Dorsolateral prefrontal cortex (tissue), 120 donors: ENCODE measurements at regions of chr10 and their contacts with region 1.

Region 1: DNA sequence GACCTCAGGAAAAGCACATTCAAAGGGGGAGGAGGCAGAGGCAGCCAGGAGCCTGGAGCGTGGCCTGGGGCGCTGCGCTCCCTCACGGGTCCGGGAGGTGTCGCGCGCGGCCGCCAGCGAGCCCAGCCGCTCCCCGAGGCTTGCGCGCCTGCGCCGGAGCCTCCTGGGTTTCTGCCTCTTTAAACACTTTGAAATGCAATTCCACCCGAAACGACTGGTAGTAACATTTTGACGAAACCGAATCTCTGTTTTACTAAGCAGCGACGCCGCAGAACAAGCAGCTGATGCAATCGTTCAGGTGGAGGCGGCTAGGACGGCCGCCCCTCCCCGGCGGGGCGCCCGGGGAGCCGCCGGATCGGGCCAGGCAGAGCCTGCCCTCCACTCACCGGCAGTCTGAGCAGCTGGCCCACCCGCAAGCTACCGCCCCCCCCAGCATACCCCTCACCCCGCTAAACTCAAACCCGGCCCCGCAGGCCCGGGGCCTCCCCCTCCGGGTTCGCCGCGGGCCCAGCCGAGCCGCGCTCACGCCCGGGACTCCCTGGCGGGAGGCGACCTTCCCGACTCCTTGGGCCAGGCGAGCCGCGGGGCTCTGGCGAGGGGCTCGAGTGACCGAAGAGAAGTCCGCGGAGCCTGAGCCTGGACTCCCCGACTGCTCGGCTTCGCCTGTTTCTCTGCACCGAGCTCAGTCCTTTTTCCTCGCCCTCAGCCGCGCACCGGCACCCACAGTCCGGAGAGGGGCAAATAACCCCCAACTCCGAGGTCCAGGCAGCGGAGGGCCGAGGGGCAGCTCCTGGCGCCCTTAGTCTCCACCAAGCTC is 3.2 kb downstream of the MKX start:
- DNase-seq: peak in 9 of 10 donors; percentile 33 to 79 (median 63)
- H3K4me3 ChIP-seq: peak overlapping the region; percentile 29 to 76 (median 60)
- H3K27ac ChIP-seq: peak overlapping the region in 51 of 59 donors; percentile 33 to 91 (median 72)
- H3K27me3 ChIP-seq: peaks cover 0 to 91% (median 60%) of the 10 kb centered on the region in 45 donors
- CTCF ChIP-seq: peak in 55 of 56 donors; percentile 29 to 82 (median 66)

Region 2: DNA sequence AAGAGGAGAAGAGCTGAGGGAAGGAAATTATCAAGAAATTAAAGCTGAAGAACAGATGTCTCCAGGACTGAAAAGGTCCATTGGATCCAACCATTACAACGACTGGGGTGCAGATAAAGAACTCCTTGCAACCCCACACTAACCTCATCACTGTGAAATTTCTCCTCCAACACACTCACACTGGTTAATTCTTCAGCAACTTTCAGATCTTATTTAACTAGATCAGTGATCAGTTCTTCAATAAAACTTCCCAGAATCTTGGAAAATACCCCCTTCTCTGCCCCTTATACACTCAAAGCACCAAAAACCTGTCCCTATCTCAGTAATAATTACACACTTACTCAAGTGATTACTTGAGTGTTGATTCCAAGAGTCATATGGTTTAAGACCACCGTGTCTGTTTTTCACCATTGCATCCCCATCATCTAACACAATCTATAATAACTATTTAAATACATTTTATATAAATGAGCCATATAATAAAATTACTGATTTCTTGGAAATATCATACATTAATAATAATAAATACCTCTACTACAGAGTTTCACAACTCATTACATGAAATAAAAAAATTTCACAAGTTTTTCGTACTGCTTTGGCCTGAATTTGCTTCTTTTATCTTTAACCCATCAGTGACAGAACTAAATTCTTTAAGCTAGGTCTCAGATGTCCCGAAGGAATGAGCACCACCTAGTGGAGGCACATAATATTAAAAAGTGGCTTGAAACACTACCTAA is 436.8 kb after region 1 on chr10:
- intact Hi-C with region 1: loop called (anchors 10 kb)
- DNase-seq: peak in 1 of 10 donors; percentile 25
- H3K4me3 ChIP-seq: peak overlapping the region in 3 of 59 donors; percentile 4 to 13 (median 4)
- H3K27ac ChIP-seq: no peak overlapping the region
- H3K27me3 ChIP-seq: peaks cover 0 to 5% (median 0%) of the 10 kb centered on the region in 45 donors
- CTCF ChIP-seq: peak; percentile 67 to 95 (median 81)